Naive thymus-derived CD4-positive, alpha-beta T cell (primary cell): ENCODE measurements at regions of chr20 and their contacts with region 1.

Region 1: DNA sequence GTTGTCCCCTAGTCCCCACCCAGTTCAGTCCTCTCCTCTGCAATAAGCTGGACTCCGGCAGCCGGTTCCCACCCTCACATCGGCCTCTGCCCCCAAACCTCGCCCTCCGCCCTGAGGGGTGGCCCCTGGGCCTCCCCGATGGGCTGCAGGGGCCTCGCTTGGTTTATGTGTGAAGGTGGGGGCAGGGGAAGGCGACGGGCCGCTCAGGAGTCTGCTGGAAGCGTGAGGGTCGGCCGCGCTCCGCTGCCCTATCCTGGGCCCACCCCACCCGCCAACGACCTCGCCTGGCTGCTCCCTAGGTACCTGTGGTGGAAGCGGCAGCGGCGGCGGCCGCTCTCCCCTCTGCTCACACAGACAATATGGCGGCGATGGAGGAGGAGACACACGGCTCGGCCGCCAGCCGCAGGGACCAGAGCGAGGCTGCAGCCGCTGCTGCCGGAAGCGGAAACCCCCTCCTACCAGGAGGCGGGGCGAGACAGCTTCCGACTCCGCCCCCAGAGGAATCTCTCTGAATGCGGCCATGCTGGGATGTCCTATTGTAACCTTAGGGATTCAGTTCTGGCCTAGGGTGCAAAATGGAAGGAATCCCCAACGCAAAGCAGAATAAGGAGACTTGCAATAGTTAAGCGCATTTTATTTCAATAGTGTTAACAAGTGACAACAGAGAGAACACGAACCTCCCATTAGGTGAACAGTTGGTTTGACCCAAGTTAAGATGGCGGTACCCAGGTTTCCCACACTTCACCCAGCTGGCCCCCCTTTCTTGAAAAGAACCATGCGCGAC is at the start of gene CSNK2A1:
- DNase-seq: peak; percentile 93 to 99 (median 97)
- ATAC-seq: peak; percentile 97
- H3K4me3 ChIP-seq: peak within 1 kb of the TSS; percentile 59
- H3K4me3 Mint-ChIP-seq: peak within 1 kb of the TSS; percentile 86 to 100 (median 91)
- H3K27ac ChIP-seq: peak within 1 kb of the TSS; percentile 94
- H3K27ac Mint-ChIP-seq: peak within 1 kb of the TSS; percentile 97 to 100 (median 98)
- H3K4me1 ChIP-seq: peaks cover 17 to 39% of the 10 kb centered on the region in 2 donors
- H3K4me1 Mint-ChIP-seq: peaks cover 40 to 58% (median 54%) of the 10 kb centered on the region in 7 donors
- H3K27me3 ChIP-seq: no peaks in the 10 kb centered on the region
- H3K27me3 Mint-ChIP-seq: peaks cover 0 to 9% (median 5%) of the 10 kb centered on the region in 5 donors
- total RNA-seq, gene CSNK2A1: 69.7 to 117 (median 90.8) TPM

Region 2: DNA sequence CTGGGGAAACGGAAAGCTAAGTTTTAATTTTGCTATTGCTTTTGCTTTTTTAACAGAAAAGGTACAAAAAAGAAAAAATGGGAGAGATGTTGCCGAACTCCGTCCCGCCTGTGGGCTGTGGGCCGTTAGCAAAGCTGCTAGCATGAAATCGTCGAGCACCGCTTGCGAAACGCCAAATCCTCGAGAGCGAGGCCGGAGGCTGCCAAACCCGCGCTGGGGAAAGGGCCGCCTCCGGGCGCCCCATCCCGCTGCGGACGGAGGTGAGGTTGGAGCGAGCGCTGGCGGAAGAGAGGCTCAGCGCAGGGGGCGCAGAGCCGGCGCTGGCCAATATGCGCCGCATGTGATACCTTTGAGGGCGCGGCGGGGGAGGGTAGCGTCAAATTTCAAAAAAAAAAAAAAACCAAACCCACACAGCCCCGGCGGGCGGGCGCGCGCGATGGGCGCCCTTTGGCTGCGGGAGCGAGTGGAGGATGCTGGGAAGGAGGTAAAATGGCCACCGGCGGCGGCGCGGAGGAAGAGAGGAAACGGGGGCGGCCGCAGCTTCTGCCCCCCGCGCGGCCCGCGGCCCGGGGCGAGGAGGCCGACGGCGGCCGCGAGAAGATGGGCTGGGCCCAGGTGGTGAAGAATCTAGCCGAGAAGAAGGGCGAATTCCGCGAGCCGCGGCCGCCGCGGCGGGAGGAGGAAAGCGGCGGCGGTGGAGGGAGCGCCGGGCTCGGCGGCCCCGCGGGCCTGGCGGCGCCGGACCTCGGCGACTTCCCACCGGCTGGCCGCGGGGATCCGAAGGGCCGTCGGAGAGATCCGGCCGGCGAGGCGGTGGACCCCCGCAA is 246.2 kb before region 1 on chr20 and contains the start of gene ZCCHC3:
- CTCF ChIA-PET with region 1: no interaction called
- POLR2A ChIA-PET with region 1: interaction called, 4 read pairs
- intact Hi-C with region 1: loop called in 1 of 2 experiments (anchors 1 kb)
- DNase-seq: peak; percentile 72 to 89 (median 84)
- ATAC-seq: peak; percentile 94
- H3K4me3 ChIP-seq: peak within 1 kb of the TSS; percentile 96
- H3K4me3 Mint-ChIP-seq: peak within 1 kb of the TSS; percentile 92 to 100 (median 98)
- H3K27ac ChIP-seq: peak within 1 kb of the TSS; percentile 91
- H3K27ac Mint-ChIP-seq: peak within 1 kb of the TSS; percentile 94 to 100 (median 97)
- H3K4me1 ChIP-seq: peaks cover 14 to 21% of the 10 kb centered on the region in 2 donors
- H3K4me1 Mint-ChIP-seq: peaks cover 33 to 51% (median 40%) of the 10 kb centered on the region in 7 donors
- H3K27me3 ChIP-seq: no peaks in the 10 kb centered on the region
- H3K27me3 Mint-ChIP-seq: peaks cover 0 to 2% (median 0%) of the 10 kb centered on the region in 5 donors
- total RNA-seq, gene ZCCHC3: 14.6 to 31.9 (median 27.1) TPM

Region 3: DNA sequence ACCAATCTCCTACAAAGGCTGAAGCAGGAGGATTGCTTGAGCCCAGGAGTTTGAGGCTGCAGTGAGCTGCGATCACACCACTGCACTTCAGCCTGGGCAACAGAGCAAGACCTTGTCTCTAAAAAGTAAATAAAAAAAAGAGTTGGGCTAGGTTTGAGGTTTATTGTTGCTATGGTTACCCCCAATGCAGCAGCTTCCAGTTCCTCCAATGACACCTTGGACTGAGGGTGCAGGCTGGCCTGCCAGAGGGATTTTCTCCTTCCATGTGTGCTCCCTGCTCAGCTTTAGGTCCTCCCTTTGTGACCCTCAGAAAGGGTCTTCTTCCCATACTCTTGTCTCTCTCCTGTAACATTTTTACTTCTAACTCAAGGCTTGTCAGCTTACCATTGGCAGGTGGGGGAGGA is 70.7 kb before region 1 on chr20:
- CTCF ChIA-PET with region 1: no interaction called
- POLR2A ChIA-PET with region 1: no interaction called
- intact Hi-C with region 1: no loop called
- DNase-seq: no peak
- ATAC-seq: no peak
- H3K4me3 ChIP-seq: no peak overlapping the region
- H3K4me3 Mint-ChIP-seq: no peak overlapping the region
- H3K27ac ChIP-seq: no peak overlapping the region
- H3K27ac Mint-ChIP-seq: no peak overlapping the region
- H3K4me1 ChIP-seq: no peaks in the 10 kb centered on the region
- H3K4me1 Mint-ChIP-seq: peaks cover 0 to 4% (median 3%) of the 10 kb centered on the region in 7 donors
- H3K27me3 ChIP-seq: no peaks in the 10 kb centered on the region
- H3K27me3 Mint-ChIP-seq: peaks cover 0 to 10% (median 8%) of the 10 kb centered on the region in 5 donors

Region 4: DNA sequence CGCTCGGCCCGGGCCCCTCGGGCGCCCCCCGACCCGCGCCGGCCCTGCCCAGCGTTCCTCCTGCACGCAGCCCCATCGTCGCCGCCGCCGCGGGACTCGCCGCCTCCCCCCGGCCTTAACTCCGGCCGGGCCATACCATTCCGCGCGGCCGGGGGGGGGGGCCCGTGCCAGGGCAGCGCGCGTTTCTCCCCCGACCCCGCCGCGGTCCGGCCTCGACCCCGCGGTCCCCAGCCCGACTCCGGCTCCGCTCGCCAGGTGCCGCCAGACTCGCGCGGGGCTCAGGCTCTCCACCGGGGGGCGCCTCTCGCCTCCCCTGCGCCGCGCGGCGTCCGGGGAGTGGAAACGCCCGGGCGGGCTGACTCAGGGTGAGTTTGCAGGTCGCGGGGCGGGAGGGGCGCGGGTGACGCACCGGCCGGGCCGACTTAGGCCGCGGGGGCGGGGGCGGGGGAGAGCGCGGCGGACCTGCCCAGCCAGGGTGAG is 109.6 kb after region 1 on chr20 and contains the start of gene SRXN1:
- CTCF ChIA-PET with region 1: no interaction called
- POLR2A ChIA-PET with region 1: no interaction called
- intact Hi-C with region 1: loop called in 1 of 2 experiments (anchors 1 kb)
- DNase-seq: peak in 8 of 9 donors; percentile 28 to 91 (median 34)
- ATAC-seq: peak; percentile 95
- H3K4me3 ChIP-seq: peak within 1 kb of the TSS; percentile 53
- H3K4me3 Mint-ChIP-seq: peak within 1 kb of the TSS; percentile 68 to 88 (median 75)
- H3K27ac ChIP-seq: no peak within 1 kb of the TSS
- H3K27ac Mint-ChIP-seq: peak within 1 kb of the TSS in 2 of 9 donors; percentile 13 to 81
- H3K4me1 ChIP-seq: peaks cover 12 to 14% of the 10 kb centered on the region in 2 donors
- H3K4me1 Mint-ChIP-seq: peaks cover 0 to 33% (median 17%) of the 10 kb centered on the region in 7 donors
- H3K27me3 ChIP-seq: no peaks in the 10 kb centered on the region
- H3K27me3 Mint-ChIP-seq: peaks cover 14 to 35% (median 30%) of the 10 kb centered on the region in 5 donors
- total RNA-seq, gene SRXN1: 0.61 to 14.8 (median 1.0) TPM

Region 5: GRCh38 chr20:750801-751200 is 207.2 kb after region 1 on chr20:
- CTCF ChIA-PET with region 1: no interaction called
- POLR2A ChIA-PET with region 1: no interaction called
- intact Hi-C with region 1: no loop called
- DNase-seq: no peak
- ATAC-seq: no peak
- H3K4me3 ChIP-seq: no peak overlapping the region
- H3K4me3 Mint-ChIP-seq: no peak overlapping the region
- H3K27ac ChIP-seq: no peak overlapping the region
- H3K27ac Mint-ChIP-seq: no peak overlapping the region
- H3K4me1 ChIP-seq: no peaks in the 10 kb centered on the region
- H3K4me1 Mint-ChIP-seq: peaks cover 0 to 15% (median 10%) of the 10 kb centered on the region in 7 donors
- H3K27me3 ChIP-seq: no peaks in the 10 kb centered on the region
- H3K27me3 Mint-ChIP-seq: peaks cover 0 to 15% (median 7%) of the 10 kb centered on the region in 5 donors

Region 6: GRCh38 chr20:844473-845225 is 301.1 kb after region 1 on chr20:
- CTCF ChIA-PET with region 1: no interaction called
- POLR2A ChIA-PET with region 1: no interaction called
- intact Hi-C with region 1: loop called in 1 of 2 experiments (anchors 5 kb)
- DNase-seq: peak; percentile 55 to 95 (median 83)
- ATAC-seq: peak; percentile 98
- H3K4me3 ChIP-seq: peak overlapping the region; percentile 75
- H3K4me3 Mint-ChIP-seq: peak overlapping the region; percentile 88 to 97 (median 94)
- H3K27ac ChIP-seq: peak overlapping the region; percentile 70
- H3K27ac Mint-ChIP-seq: peak overlapping the region in 8 of 9 donors; percentile 70 to 93 (median 86)
- H3K4me1 ChIP-seq: peaks cover 40 to 45% of the 10 kb centered on the region in 2 donors
- H3K4me1 Mint-ChIP-seq: peaks cover 30 to 58% (median 52%) of the 10 kb centered on the region in 7 donors
- H3K27me3 ChIP-seq: no peaks in the 10 kb centered on the region
- H3K27me3 Mint-ChIP-seq: no peaks in the 10 kb centered on the region

Region 7: GRCh38 chr20:2101865-2102584 is 1558.5 kb after region 1 on chr20:
- CTCF ChIA-PET with region 1: no interaction called
- POLR2A ChIA-PET with region 1: no interaction called
- intact Hi-C with region 1: loop called in 1 of 2 experiments (anchors 2 kb)
- DNase-seq: peak; percentile 82 to 94 (median 92)
- ATAC-seq: peak; percentile 88
- H3K4me3 ChIP-seq: peak overlapping the region; percentile 88
- H3K4me3 Mint-ChIP-seq: peak overlapping the region; percentile 90 to 97 (median 96)
- H3K27ac ChIP-seq: peak overlapping the region; percentile 96
- H3K27ac Mint-ChIP-seq: peak overlapping the region; percentile 99 to 100 (median 100)
- H3K4me1 ChIP-seq: peaks cover 29 to 38% of the 10 kb centered on the region in 2 donors
- H3K4me1 Mint-ChIP-seq: peaks cover 36 to 58% (median 44%) of the 10 kb centered on the region in 7 donors
- H3K27me3 ChIP-seq: no peaks in the 10 kb centered on the region
- H3K27me3 Mint-ChIP-seq: peaks cover 0 to 4% (median 0%) of the 10 kb centered on the region in 5 donors

Region 8: GRCh38 chr20:2508631-2509467 is 1965.3 kb after region 1 on chr20 and contains the start of gene ZNF343:
- CTCF ChIA-PET with region 1: no interaction called
- POLR2A ChIA-PET with region 1: no interaction called
- intact Hi-C with region 1: loop called in 1 of 2 experiments (anchors 2 kb)
- DNase-seq: peak; percentile 61 to 84 (median 82)
- ATAC-seq: peak; percentile 97
- H3K4me3 ChIP-seq: peak within 1 kb of the TSS; percentile 97
- H3K4me3 Mint-ChIP-seq: peak within 1 kb of the TSS; percentile 92 to 100 (median 98)
- H3K27ac ChIP-seq: peak within 1 kb of the TSS; percentile 84
- H3K27ac Mint-ChIP-seq: peak within 1 kb of the TSS; percentile 90 to 99 (median 98)
- H3K4me1 ChIP-seq: peaks cover 6 to 7% of the 10 kb centered on the region in 2 donors
- H3K4me1 Mint-ChIP-seq: peaks cover 11 to 30% (median 25%) of the 10 kb centered on the region in 7 donors
- H3K27me3 ChIP-seq: no peaks in the 10 kb centered on the region
- H3K27me3 Mint-ChIP-seq: peaks cover 8 to 28% (median 12%) of the 10 kb centered on the region in 5 donors
- total RNA-seq, gene ZNF343: 7.5 to 14.4 (median 11.8) TPM